ENCODE measurements at regions of chr9 and their contacts with region 1.

Region 1: DNA sequence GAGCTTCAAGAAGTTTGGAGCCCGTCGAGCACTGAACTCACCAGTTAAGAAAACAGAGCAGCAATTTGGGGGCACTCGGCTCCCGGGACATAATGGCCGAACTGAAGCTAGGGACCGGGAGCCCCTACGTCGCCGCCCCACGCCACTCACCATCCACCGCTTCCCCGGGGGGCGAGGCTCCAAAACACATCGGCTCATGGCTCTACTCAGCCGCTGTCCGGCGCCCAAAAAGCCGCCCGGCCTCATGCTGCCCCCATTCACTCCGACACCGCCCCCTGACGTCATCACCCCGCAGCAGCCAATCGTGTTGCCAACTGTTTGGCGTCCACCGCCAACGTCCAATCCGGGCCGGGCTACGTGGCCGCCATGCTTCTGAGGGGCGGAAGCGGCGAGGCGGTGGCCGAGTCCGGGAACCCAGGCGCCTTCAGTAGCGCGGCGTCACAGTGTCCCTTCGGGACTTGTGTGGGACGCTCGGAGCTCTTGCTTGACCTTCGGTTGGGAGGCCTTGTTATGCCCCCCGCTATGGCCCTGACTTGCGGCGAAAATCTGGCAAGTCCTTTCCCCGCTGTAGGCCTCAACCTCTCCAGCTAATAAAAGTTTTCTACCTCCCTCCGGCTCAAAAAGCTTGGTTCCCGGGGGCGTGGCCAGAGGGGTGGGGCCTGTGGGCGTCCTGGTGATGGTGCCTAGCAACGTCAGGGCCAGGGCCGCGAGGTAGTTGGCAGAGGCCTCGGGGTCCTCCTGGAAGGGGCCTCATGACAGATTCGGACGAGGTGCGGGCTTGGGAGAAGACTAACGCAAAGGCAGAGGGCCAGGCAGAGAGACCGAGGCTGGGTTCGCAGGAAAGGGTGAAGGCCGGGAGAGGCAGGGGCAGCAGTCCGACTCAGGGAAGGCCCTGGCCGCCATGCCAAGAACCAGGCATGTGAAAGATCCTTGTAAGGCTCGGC is at the starts of genes PTRH1 and TTC16:
- DNase-seq: peak; percentile 97
- H3K4me3 ChIP-seq: peak within 1 kb of the TSS; percentile 64 to 65
- H3K27ac ChIP-seq: peak within 1 kb of the TSS; percentile 79 to 86
- H3K4me1 ChIP-seq: no peaks in the 10 kb centered on the region
- H3K27me3 ChIP-seq: no peaks in the 10 kb centered on the region
- CTCF ChIP-seq: peak in 2 of 4 experiments; percentile 1 to 31
- POLR2A ChIP-seq: peak; percentile 50
- total RNA-seq, gene PTRH1: 25.4 to 28.6 TPM
- total RNA-seq, gene TTC16: 3.4 TPM in 1 of 2 donors, not detected in the other

Region 2: GRCh38 chr9:127611899-127612790 is 103.5 kb before region 1 on chr9 and contains the start of gene STXBP1:
- intact Hi-C with region 1: loop called (anchors 5 kb)
- DNase-seq: peak; percentile 89
- H3K4me3 ChIP-seq: peak within 1 kb of the TSS; percentile 81 to 98
- H3K27ac ChIP-seq: peak within 1 kb of the TSS; percentile 86 to 89
- H3K4me1 ChIP-seq: no peaks in the 10 kb centered on the region
- H3K27me3 ChIP-seq: no peaks in the 10 kb centered on the region
- CTCF ChIP-seq: peak in 2 of 4 experiments; percentile 35 to 37
- POLR2A ChIP-seq: peak; percentile 79
- total RNA-seq, gene STXBP1: 32.2 to 47.6 TPM

Measured in prostate gland (tissue), 2 donors.